ENCODE measurements at regions of chr6 and their contacts with region 1.

Region 1: GRCh38 chr6:127090051-127090450 is 28.4 kb upstream of the RSPO3 start:
- DNase-seq: no peak
- H3K4me3 ChIP-seq: no peak overlapping the region
- H3K27ac ChIP-seq: no peak overlapping the region
- H3K4me1 ChIP-seq: no peaks in the 10 kb centered on the region
- H3K27me3 ChIP-seq: no peaks in the 10 kb centered on the region
- CTCF ChIP-seq: no peak
- POLR2A ChIP-seq: no peak

Region 2: GRCh38 chr6:127019828-127020227 is 70.2 kb before region 1 on chr6:
- CTCF ChIA-PET with region 1: no interaction called
- POLR2A ChIA-PET with region 1: no interaction called
- dilution Hi-C with region 1: no loop called
- intact Hi-C with region 1: loop called (anchors 2 kb)
- DNase-seq: no peak
- H3K4me3 ChIP-seq: no peak overlapping the region
- H3K27ac ChIP-seq: no peak overlapping the region
- H3K4me1 ChIP-seq: no peaks in the 10 kb centered on the region
- H3K27me3 ChIP-seq: no peaks in the 10 kb centered on the region
- CTCF ChIP-seq: no peak
- POLR2A ChIP-seq: no peak

Measured in endothelial cell of umbilical vein (primary cell).